ENCODE measurements at regions of chr22 and their contacts with region 1.

Region 1: GRCh38 chr22:27507935-27508526 is 293.5 kb downstream of the MN1 start:
- DNase-seq: no peak
- H3K4me3 ChIP-seq: no peak overlapping the region
- H3K27ac ChIP-seq: no peak overlapping the region
- H3K4me1 ChIP-seq: peaks cover 0 to 5% (median 0%) of the 10 kb centered on the region in 4 donors
- H3K27me3 ChIP-seq: no peaks in the 10 kb centered on the region
- CTCF ChIP-seq: no peak
- EP300 ChIP-seq: no peak
- POLR2A ChIP-seq: no peak

Region 2: DNA sequence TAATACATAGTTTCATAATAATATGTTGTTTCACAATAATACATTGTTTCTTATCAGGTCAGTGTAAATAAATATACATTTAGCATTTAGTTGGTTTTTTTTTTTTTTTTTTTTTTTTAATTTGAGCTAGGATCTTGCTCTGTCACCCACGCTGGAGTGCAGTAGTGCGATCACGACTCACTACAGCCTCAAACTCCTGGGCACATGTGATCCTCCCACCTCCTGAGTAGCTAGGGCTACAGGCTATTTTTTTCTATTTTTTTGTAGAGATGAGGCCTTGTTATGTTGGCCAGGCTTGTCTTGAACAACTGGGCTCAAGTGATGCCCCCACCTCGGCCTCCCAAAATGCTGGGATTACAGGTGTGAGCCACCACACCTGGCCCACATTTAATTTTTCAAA is 807.1 kb before region 1 on chr22:
- in situ Hi-C with region 1: no loop called
- intact Hi-C with region 1: no loop called
- DNase-seq: no peak
- H3K4me3 ChIP-seq: no peak overlapping the region
- H3K27ac ChIP-seq: no peak overlapping the region
- H3K4me1 ChIP-seq: no peaks in the 10 kb centered on the region
- H3K27me3 ChIP-seq: no peaks in the 10 kb centered on the region
- CTCF ChIP-seq: no peak
- EP300 ChIP-seq: no peak
- POLR2A ChIP-seq: no peak

Region 3: GRCh38 chr22:27420817-27421361 is 87.1 kb before region 1 on chr22:
- in situ Hi-C with region 1: no loop called
- intact Hi-C with region 1: no loop called
- DNase-seq: peak; percentile 46
- H3K4me3 ChIP-seq: no peak overlapping the region
- H3K27ac ChIP-seq: peak overlapping the region in 3 of 4 donors; percentile 50 to 56 (median 52)
- H3K4me1 ChIP-seq: peaks cover 0 to 8% (median 3%) of the 10 kb centered on the region in 4 donors
- H3K27me3 ChIP-seq: peaks cover 10% of the 10 kb centered on the region
- CTCF ChIP-seq: no peak
- EP300 ChIP-seq: no peak
- POLR2A ChIP-seq: no peak

Region 4: DNA sequence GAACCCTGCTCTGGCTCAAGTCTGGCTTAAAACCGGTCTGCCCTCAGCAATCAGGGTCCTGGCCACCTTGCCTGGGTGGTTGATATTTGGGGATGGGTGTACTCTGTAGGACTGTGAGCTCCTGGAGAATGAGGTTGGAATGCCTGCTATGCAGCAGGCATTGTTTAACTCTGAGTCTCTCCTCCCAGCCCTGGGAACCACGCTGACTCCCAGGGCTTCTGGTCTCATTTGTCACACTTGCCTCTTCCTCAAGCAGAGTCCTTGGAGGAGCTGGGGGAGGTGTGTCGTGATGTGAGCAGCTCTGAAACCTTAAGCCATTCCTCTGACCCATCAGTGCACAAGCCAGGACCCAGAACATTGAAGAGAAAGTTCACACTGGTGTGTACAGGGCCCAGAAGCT is 46.6 kb before region 1 on chr22:
- in situ Hi-C with region 1: no loop called
- intact Hi-C with region 1: loop called (anchors 1 kb)
- DNase-seq: no peak
- H3K4me3 ChIP-seq: no peak overlapping the region
- H3K27ac ChIP-seq: no peak overlapping the region
- H3K4me1 ChIP-seq: no peaks in the 10 kb centered on the region
- H3K27me3 ChIP-seq: no peaks in the 10 kb centered on the region
- CTCF ChIP-seq: no peak
- EP300 ChIP-seq: no peak
- POLR2A ChIP-seq: no peak

Measured in transverse colon (tissue), 4 donors.